ENCODE measurements at regions of chr5 and their contacts with region 1.

Region 1: GRCh38 chr5:82351754-82352145 is 73.6 kb upstream of the RPS23 start:
- DNase-seq: no peak
- ATAC-seq: peak; percentile 57
- H3K4me3 Mint-ChIP-seq: no peak overlapping the region
- H3K27ac Mint-ChIP-seq: no peak overlapping the region
- H3K4me1 Mint-ChIP-seq: peaks cover 6% of the 10 kb centered on the region
- H3K27me3 Mint-ChIP-seq: no peaks in the 10 kb centered on the region
- CTCF ChIP-seq: peak; percentile 78

Region 2: GRCh38 chr5:82285206-82285605 is 66.5 kb before region 1 on chr5:
- CTCF ChIA-PET with region 1: no interaction called
- POLR2A ChIA-PET with region 1: no interaction called
- intact Hi-C with region 1: no loop called
- DNase-seq: no peak
- ATAC-seq: no peak
- H3K4me3 Mint-ChIP-seq: no peak overlapping the region
- H3K27ac Mint-ChIP-seq: no peak overlapping the region
- H3K4me1 Mint-ChIP-seq: peaks cover 3% of the 10 kb centered on the region
- H3K27me3 Mint-ChIP-seq: no peaks in the 10 kb centered on the region
- CTCF ChIP-seq: no peak

Region 3: DNA sequence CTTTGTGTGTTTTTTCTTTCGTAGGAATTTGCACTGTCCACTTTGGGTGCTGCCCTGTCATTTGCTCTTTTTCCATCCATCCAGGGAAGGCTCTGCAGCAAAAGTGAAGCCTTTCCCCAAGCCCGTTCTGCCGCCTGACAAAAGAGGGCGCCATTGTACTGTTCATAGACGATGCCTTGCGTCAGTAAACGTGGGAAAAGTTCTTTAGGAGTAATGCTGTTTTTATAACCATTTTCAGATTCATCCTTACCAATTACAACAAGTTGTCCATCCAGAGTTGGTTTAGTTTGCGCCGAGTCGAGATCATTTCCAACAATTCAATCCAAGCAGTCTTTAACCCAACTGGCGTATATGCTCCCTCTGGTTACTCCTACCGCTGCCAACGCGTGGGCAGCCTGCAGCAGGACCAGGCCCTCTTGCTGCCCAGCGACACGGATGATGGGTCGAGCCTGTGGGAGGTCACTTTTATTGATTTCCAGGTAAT is 39.3 kb before region 1 on chr5:
- CTCF ChIA-PET with region 1: interaction called, 19 read pairs
- POLR2A ChIA-PET with region 1: no interaction called
- intact Hi-C with region 1: no loop called
- DNase-seq: peak; percentile 57
- ATAC-seq: peak; percentile 47
- H3K4me3 Mint-ChIP-seq: no peak overlapping the region
- H3K27ac Mint-ChIP-seq: no peak overlapping the region
- H3K4me1 Mint-ChIP-seq: no peaks in the 10 kb centered on the region
- H3K27me3 Mint-ChIP-seq: peaks cover 8% of the 10 kb centered on the region
- CTCF ChIP-seq: peak; percentile 68

Region 4: GRCh38 chr5:82365744-82366228 is 14.0 kb after region 1 on chr5:
- CTCF ChIA-PET with region 1: interaction called, 10 read pairs
- POLR2A ChIA-PET with region 1: no interaction called
- intact Hi-C with region 1: no loop called
- DNase-seq: peak; percentile 74
- ATAC-seq: peak; percentile 96
- H3K4me3 Mint-ChIP-seq: no peak overlapping the region
- H3K27ac Mint-ChIP-seq: no peak overlapping the region
- H3K4me1 Mint-ChIP-seq: peaks cover 13% of the 10 kb centered on the region
- H3K27me3 Mint-ChIP-seq: peaks cover 5% of the 10 kb centered on the region
- CTCF ChIP-seq: no peak

Region 5: GRCh38 chr5:82439750-82440445 is 88.1 kb after region 1 on chr5:
- CTCF ChIA-PET with region 1: no interaction called
- POLR2A ChIA-PET with region 1: no interaction called
- intact Hi-C with region 1: no loop called
- DNase-seq: no peak
- ATAC-seq: no peak
- H3K4me3 Mint-ChIP-seq: no peak overlapping the region
- H3K27ac Mint-ChIP-seq: no peak overlapping the region
- H3K4me1 Mint-ChIP-seq: no peaks in the 10 kb centered on the region
- H3K27me3 Mint-ChIP-seq: no peaks in the 10 kb centered on the region
- CTCF ChIP-seq: no peak

Region 6: GRCh38 chr5:82635561-82636288 is 284.0 kb after region 1 on chr5:
- CTCF ChIA-PET with region 1: no interaction called
- POLR2A ChIA-PET with region 1: no interaction called
- intact Hi-C with region 1: loop called (anchors 10 kb)
- DNase-seq: no peak
- ATAC-seq: peak; percentile 42
- H3K4me3 Mint-ChIP-seq: no peak overlapping the region
- H3K27ac Mint-ChIP-seq: no peak overlapping the region
- H3K4me1 Mint-ChIP-seq: peaks cover 1% of the 10 kb centered on the region
- H3K27me3 Mint-ChIP-seq: no peaks in the 10 kb centered on the region
- CTCF ChIP-seq: no peak

Region 7: GRCh38 chr5:83430130-83431010 is 1078.6 kb after region 1 on chr5:
- CTCF ChIA-PET with region 1: interaction called, 3 read pairs
- POLR2A ChIA-PET with region 1: no interaction called
- intact Hi-C with region 1: loop called (anchors 5 kb)
- DNase-seq: peak; percentile 70
- ATAC-seq: peak; percentile 79
- H3K4me3 Mint-ChIP-seq: no peak overlapping the region
- H3K27ac Mint-ChIP-seq: no peak overlapping the region
- H3K4me1 Mint-ChIP-seq: no peaks in the 10 kb centered on the region
- H3K27me3 Mint-ChIP-seq: peaks cover 2% of the 10 kb centered on the region
- CTCF ChIP-seq: peak; percentile 76

Measured in activated CD8-positive, alpha-beta T cell treated with anti-CD3 and anti-CD28 coated beads for 36 hours (primary cell).